ENCODE measurements at regions of chr2 and their contacts with region 1.

Region 1: DNA sequence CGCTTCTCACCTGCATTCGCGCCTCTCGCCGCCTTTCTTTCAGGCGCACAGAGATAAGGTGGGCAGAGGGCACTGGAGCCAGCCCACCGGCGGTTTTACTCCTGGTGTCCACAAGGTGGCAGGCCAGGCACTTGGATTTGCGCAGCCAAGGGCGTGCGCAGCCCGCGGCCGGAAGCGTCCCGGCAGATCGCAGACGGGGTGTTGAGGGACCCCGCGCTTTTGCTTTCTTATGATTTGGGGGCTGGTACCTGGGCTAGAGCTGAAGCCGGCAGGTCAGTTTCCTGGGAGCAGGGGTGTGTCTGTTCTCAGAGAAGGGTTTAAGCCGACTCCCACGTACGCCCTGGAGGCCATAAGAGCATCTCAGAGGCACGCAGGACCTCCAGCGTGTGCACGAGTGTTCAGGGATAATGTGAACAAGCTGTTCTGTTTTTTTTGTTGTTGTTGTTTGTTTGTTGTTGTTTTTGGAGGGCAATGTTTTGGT is 305.6 kb upstream of the CXCR4 start:
- DNase-seq: peak; percentile 42 to 93 (median 72)

Region 2: DNA sequence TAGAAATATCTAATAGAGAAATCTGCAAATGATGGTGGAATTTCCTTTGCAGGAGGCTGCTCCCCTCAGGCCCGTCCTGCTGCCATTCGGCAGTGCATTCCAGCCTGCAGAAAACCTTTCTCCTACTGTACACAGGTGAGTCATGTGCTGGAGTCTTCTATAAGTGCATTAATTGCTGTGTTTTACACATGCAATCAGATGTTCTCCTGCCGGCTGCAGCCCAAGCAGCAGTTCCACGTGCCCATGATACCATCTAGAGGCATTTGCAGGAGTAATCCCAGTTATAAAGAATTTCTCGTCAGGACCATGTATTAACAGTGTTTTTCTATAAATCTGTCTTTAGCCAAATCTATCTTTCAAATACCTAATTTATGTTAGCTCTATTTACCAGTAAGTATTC is 1236.1 kb after region 1 on chr2:
- intact Hi-C with region 1: loop called (anchors 5 kb)
- DNase-seq: peak in 7 of 10 donors; percentile 12 to 83 (median 34)

Measured in posterior cingulate gyrus (tissue), 11 donors.